Gastrocnemius medialis (tissue), 4 donors: ENCODE measurements at regions of chr9 and their contacts with region 1.

Region 1: GRCh38 chr9:15306757-15307534 is at the start of gene TTC39B:
- DNase-seq: peak; percentile 82 to 86
- ATAC-seq: peak; percentile 82 to 84
- H3K4me3 ChIP-seq: peak within 1 kb of the TSS; percentile 83 to 97 (median 90)
- H3K27ac ChIP-seq: peak within 1 kb of the TSS; percentile 80 to 92 (median 89)
- H3K4me1 ChIP-seq: peaks cover 11 to 13% of the 10 kb centered on the region in 2 donors
- H3K27me3 ChIP-seq: no peaks in the 10 kb centered on the region
- CTCF ChIP-seq: peak in 1 of 5 experiments; percentile 14
- POLR2A ChIP-seq: peak; percentile 56 to 77
- total RNA-seq, gene TTC39B: 1.8 to 6.9 (median 3.8) TPM

Region 2: GRCh38 chr9:15277400-15278090 is 29.4 kb before region 1 on chr9:
- in situ Hi-C with region 1: no loop called
- intact Hi-C with region 1: loop called (anchors 2 kb)
- DNase-seq: no peak
- ATAC-seq: peak in 1 of 2 donors; percentile 61
- H3K4me3 ChIP-seq: no peak overlapping the region
- H3K27ac ChIP-seq: no peak overlapping the region
- H3K4me1 ChIP-seq: peaks cover 4 to 7% of the 10 kb centered on the region in 2 donors
- H3K27me3 ChIP-seq: no peaks in the 10 kb centered on the region
- CTCF ChIP-seq: peak in 3 of 5 experiments; percentile 19 to 37 (median 27)
- POLR2A ChIP-seq: no peak

Region 3: DNA sequence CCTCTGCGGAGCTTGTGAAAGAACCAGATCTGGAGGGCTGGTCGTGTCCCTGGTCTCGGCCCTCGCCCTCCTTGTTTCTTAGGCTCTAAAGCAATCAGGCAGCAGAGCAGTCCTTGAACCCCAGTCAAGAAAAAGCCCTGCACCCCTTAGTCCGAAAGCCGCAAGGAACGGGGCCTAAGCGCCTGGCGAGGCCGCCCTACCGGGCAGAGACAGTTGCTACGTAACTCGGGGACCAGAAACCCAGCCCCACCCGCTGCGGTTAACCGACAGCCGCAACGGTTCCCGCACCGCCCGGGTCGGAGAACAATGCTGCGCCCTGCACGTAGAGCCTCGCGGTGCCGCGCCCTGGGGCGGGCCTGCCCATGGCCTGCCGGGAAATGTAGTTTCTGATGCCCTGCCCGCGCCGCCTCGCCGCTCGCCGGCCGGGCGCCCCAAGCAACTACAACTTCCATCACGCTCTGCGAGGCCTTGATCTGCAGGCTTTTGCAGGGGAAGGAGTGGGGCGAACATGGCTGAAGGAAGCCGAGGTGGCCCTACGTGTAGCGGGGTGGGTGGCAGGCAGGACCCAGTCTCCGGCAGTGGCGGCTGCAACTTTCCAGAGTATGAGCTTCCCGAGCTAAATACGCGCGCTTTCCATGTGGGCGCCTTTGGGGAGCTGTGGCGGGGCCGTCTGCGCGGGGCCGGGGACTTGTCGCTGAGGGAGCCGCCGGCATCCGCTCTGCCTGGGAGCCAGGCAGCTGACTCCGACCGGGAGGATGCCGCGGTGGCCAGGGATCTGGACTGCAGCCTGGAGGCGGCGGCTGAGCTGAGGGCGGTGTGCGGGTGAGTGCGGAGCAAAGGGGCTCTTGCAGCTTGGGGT is 115.7 kb after region 1 on chr9 and contains the start of gene SNAPC3:
- in situ Hi-C with region 1: loop called in 2 of 4 experiments (anchors 5 to 10 kb)
- intact Hi-C with region 1: loop called (anchors 5 kb)
- DNase-seq: peak; percentile 83 to 88
- ATAC-seq: peak; percentile 97 to 98
- H3K4me3 ChIP-seq: peak within 1 kb of the TSS; percentile 86 to 100 (median 89)
- H3K27ac ChIP-seq: peak within 1 kb of the TSS; percentile 86 to 91 (median 90)
- H3K4me1 ChIP-seq: peaks cover 6 to 16% of the 10 kb centered on the region in 2 donors
- H3K27me3 ChIP-seq: no peaks in the 10 kb centered on the region
- CTCF ChIP-seq: peak in 2 of 5 experiments; percentile 16 to 18
- POLR2A ChIP-seq: peak; percentile 50 to 51
- total RNA-seq, gene SNAPC3: 18.3 to 31.9 (median 20.3) TPM

Region 4: GRCh38 chr9:15433661-15434060 is 126.7 kb after region 1 on chr9:
- in situ Hi-C with region 1: no loop called
- intact Hi-C with region 1: no loop called
- DNase-seq: no peak
- ATAC-seq: no peak
- H3K4me3 ChIP-seq: no peak overlapping the region
- H3K27ac ChIP-seq: no peak overlapping the region
- H3K4me1 ChIP-seq: no peaks in the 10 kb centered on the region
- H3K27me3 ChIP-seq: no peaks in the 10 kb centered on the region
- CTCF ChIP-seq: no peak
- POLR2A ChIP-seq: no peak

Region 5: DNA sequence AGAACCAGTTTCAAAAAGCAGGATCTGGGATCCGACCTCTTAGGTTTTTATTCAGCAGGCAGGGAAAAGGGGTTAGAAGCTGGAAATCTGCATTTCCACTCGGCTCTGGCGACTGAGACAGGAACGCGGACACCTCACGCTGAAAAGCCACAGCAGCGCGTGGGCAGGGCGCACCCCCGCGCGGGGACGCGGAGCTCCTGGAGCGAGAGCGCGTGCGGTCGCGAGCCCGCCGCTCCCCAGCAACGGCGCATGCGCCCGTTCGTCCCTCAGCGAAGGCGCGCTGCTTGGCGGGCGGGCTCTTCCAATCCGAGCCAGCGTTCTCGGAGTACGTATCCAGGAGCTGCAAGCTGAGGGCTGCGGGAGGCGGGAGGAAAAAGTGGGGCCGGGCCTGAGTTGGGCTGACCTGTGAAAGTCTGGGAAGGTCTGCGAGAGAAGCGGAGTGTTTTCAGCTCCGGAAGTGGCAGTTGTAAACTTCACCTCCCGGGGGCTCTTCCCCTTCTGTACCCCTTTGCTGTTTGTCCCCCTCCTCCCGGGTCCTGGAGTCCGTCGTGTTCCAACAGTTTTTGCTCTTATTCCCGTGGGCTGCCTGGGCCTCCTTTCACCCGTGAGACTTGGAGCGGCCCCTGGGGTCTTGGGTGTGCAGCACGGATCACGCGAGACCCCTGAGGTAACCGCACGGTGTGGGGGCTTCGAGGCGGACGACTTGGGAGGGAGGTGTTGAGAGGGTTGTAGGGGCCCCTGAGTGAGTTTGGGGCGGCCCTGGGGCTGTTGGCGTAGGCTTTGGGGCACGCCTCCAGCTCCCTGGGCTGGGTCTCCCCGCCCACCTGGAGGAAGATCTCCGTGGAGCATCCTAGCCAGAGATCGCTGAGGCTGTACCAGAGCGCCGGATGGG is 245.9 kb after region 1 on chr9 and contains the start of gene CCDC171:
- in situ Hi-C with region 1: no loop called
- intact Hi-C with region 1: loop called (anchors 5 kb)
- DNase-seq: peak; percentile 81 to 86
- ATAC-seq: peak; percentile 95 to 96
- H3K4me3 ChIP-seq: peak within 1 kb of the TSS; percentile 69 to 90 (median 83)
- H3K27ac ChIP-seq: peak within 1 kb of the TSS; percentile 68 to 80 (median 76)
- H3K4me1 ChIP-seq: no peaks in the 10 kb centered on the region
- H3K27me3 ChIP-seq: no peaks in the 10 kb centered on the region
- CTCF ChIP-seq: no peak
- POLR2A ChIP-seq: peak; percentile 31 to 46
- total RNA-seq, gene CCDC171: 0.61 to 1.7 (median 1.3) TPM

Region 6: DNA sequence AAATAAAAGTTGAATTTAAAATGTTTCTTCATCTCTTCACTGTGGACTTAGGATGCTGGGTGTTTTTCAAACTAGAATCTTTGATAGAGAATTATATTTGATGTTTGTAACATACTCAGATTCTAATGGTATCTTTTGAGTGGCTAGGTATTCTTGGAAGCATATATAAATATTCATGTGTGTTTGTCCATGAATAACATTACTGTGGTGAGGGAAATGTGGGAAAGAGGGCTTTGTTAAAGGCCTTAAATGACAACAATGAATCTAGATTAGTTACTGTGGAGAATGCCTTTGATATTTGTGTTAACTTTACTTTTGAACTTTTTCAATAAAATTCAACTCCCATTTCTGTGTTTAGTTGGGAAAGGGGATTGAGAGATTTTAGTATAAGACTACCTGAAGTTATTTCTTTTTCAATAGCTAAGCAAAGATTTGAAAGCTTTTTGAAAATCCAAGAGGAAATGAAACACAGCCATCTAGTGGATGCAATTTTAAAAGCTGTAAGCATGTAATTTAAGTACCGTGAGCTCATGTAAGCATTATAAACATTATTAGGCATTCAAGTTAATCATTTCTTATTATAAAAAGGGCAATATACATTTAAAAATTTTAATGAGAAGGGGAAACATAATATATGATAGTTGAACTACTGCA is 315.5 kb after region 1 on chr9:
- in situ Hi-C with region 1: no loop called
- intact Hi-C with region 1: no loop called
- DNase-seq: no peak
- ATAC-seq: no peak
- H3K4me3 ChIP-seq: no peak overlapping the region
- H3K27ac ChIP-seq: no peak overlapping the region
- H3K4me1 ChIP-seq: no peaks in the 10 kb centered on the region
- H3K27me3 ChIP-seq: no peaks in the 10 kb centered on the region
- CTCF ChIP-seq: no peak
- POLR2A ChIP-seq: no peak